T-cell (primary cell): ENCODE measurements at regions of chr4 and their contacts with region 1.

Region 1: DNA sequence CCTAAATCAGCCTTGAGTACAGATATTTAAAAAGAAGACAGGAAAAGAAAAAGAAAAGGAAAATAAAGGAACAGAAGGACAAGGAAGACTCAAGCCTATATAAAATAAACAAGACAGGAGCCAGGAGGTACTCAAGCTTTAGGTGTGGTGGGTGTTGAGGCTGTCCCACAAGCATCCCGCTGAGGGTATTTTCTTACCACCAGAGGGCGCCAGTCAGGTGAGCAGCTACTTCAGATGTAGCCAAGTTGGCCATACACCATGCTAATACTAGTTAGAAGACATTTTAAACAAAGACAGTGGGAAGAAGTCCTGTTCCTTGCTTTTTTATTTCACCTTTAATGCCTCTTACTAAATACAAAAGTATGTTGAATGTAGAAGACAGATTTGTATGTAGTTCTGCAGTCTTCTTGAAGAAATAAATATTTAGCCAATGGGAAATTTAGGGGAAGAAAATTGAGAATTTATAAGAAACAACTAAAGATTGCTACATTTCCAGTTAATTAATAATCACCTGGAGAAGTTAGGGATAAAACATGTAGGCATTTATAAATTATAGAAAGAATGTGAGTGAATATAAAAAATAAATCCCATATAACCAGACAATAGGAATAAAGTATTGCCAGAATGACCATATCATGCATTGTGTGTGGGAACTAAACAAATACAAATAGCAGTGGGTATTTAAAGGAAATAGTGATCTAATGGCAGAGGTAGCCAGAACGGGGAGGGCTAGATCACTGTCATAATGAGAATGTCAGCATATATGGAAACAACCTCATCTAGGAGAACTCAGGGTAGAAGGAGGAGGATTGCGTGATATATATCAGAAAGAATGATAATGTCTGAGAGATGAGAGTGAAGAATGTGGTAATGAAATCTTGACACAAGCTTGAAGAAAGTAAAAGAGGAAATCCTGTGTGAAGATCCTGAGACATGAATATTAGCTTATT is 71.0 kb downstream of the MTHFD2L start:
- DNase-seq: peak; percentile 19 to 83 (median 62)
- ATAC-seq: peak; percentile 52 to 78 (median 66)
- H3K4me3 ChIP-seq: no peak overlapping the region
- H3K4me3 Mint-ChIP-seq: no peak overlapping the region
- H3K27ac ChIP-seq: no peak overlapping the region
- H3K27ac Mint-ChIP-seq: no peak overlapping the region
- H3K4me1 ChIP-seq: no peaks in the 10 kb centered on the region
- H3K4me1 Mint-ChIP-seq: peaks cover 0 to 1% (median 0%) of the 10 kb centered on the region in 3 donors
- H3K27me3 ChIP-seq: no peaks in the 10 kb centered on the region
- H3K27me3 Mint-ChIP-seq: no peaks in the 10 kb centered on the region

Region 2: DNA sequence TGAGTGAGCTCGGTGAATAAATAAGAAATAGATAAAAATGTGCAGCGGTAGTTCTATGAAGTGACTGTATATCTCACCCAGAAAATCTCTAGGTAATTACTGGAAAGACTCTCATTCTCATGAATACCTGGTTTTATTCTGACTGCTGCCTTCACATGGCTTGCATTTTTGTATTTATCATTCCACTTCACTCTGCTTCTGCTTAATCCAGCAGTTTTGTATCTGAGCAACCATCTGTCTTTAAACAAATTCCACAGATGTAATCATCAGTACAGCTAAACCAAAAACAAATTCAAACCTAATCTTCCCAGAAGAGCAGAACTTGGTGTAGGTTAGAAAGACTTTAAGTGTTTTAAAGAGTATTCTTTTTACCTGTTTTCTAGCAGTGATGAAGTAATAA is 836.0 kb before region 1 on chr4:
- CTCF ChIA-PET with region 1: no interaction called
- POLR2A ChIA-PET with region 1: no interaction called
- DNase-seq: no peak
- ATAC-seq: no peak
- H3K4me3 ChIP-seq: no peak overlapping the region
- H3K4me3 Mint-ChIP-seq: no peak overlapping the region
- H3K27ac ChIP-seq: no peak overlapping the region
- H3K27ac Mint-ChIP-seq: no peak overlapping the region
- H3K4me1 ChIP-seq: no peaks in the 10 kb centered on the region
- H3K4me1 Mint-ChIP-seq: no peaks in the 10 kb centered on the region
- H3K27me3 ChIP-seq: no peaks in the 10 kb centered on the region
- H3K27me3 Mint-ChIP-seq: peaks cover 8% of the 10 kb centered on the region in 2 donors

Region 3: GRCh38 chr4:73964862-73965611 is 263.9 kb before region 1 on chr4:
- CTCF ChIA-PET with region 1: no interaction called
- POLR2A ChIA-PET with region 1: no interaction called
- DNase-seq: no peak
- ATAC-seq: no peak
- H3K4me3 ChIP-seq: no peak overlapping the region
- H3K4me3 Mint-ChIP-seq: no peak overlapping the region
- H3K27ac ChIP-seq: no peak overlapping the region
- H3K27ac Mint-ChIP-seq: no peak overlapping the region
- H3K4me1 ChIP-seq: no peaks in the 10 kb centered on the region
- H3K4me1 Mint-ChIP-seq: no peaks in the 10 kb centered on the region
- H3K27me3 ChIP-seq: peaks cover 0 to 3% of the 10 kb centered on the region in 2 experiments
- H3K27me3 Mint-ChIP-seq: no peaks in the 10 kb centered on the region

Region 4: DNA sequence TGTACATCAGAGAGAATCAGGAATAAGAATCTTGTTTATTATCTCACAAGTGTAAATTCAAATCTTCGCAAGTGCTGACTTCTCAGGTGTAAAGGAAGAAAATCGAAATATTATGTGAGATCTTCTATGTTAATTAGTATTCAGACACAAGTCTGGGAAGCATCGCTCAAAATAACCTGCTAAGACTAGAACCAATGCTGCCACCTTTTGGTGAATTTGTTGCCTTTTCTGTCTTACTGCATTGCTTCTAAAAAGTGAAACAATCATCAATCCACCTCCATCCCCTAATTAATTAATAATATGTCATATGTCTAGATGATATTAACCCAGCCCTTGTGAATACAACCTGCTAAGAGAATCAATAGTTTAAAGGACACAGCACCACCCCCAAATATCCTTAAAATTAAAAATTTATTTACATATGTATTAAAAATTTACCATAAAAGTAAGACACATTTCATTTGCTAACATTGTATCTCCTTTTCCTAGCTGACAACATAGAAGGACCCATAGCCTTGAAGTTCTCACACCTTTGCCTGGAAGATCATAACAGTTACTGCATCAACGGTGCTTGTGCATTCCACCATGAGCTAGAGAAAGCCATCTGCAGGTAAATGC is 82.8 kb after region 1 on chr4:
- CTCF ChIA-PET with region 1: interaction called, 4 to 13 read pairs
- POLR2A ChIA-PET with region 1: no interaction called
- DNase-seq: peak in 6 of 35 experiments; percentile 7 to 64 (median 12)
- ATAC-seq: no peak
- H3K4me3 ChIP-seq: no peak overlapping the region
- H3K4me3 Mint-ChIP-seq: no peak overlapping the region
- H3K27ac ChIP-seq: no peak overlapping the region
- H3K27ac Mint-ChIP-seq: no peak overlapping the region
- H3K4me1 ChIP-seq: peaks cover 0 to 10% of the 10 kb centered on the region in 2 experiments
- H3K4me1 Mint-ChIP-seq: peaks cover 9 to 13% (median 12%) of the 10 kb centered on the region in 3 donors
- H3K27me3 ChIP-seq: no peaks in the 10 kb centered on the region
- H3K27me3 Mint-ChIP-seq: peaks cover 0 to 3% of the 10 kb centered on the region in 2 donors

Region 5: DNA sequence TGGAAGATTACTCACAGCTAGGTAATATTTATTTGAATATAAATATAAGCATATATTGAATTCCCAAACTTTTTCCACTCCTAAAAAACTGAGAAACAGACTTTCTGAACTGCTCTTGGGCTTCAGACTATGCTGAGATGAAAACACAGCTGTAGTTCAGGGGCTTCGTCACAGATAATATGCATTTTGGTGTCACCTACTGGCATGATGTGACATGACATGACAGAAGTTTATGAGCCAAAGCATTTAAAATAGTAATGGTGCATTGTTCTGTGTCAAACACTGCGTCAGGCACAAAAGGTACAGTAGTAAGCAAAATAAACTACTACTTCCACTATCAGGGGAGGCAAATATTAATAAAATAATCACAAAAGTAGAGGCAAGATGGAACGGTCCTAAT is 394.1 kb after region 1 on chr4:
- CTCF ChIA-PET with region 1: interaction called in 1 of 2 experiments, 14 read pairs
- POLR2A ChIA-PET with region 1: no interaction called
- DNase-seq: peak in 8 of 35 experiments; percentile 0 to 51 (median 4)
- ATAC-seq: peak in 3 of 4 experiments; percentile 35 to 69 (median 53)
- H3K4me3 ChIP-seq: no peak overlapping the region
- H3K4me3 Mint-ChIP-seq: no peak overlapping the region
- H3K27ac ChIP-seq: no peak overlapping the region
- H3K27ac Mint-ChIP-seq: no peak overlapping the region
- H3K4me1 ChIP-seq: peaks cover 0 to 14% of the 10 kb centered on the region in 2 experiments
- H3K4me1 Mint-ChIP-seq: peaks cover 22 to 35% (median 23%) of the 10 kb centered on the region in 3 donors
- H3K27me3 ChIP-seq: no peaks in the 10 kb centered on the region
- H3K27me3 Mint-ChIP-seq: peaks cover 0 to 3% of the 10 kb centered on the region in 2 donors

Region 6: GRCh38 chr4:74675673-74676279 is 446.8 kb after region 1 on chr4:
- CTCF ChIA-PET with region 1: interaction called, 3 to 17 read pairs
- POLR2A ChIA-PET with region 1: interaction called in 1 of 2 experiments, 3 read pairs
- DNase-seq: peak in 2 of 35 experiments; percentile 3 to 52
- ATAC-seq: peak in 1 of 4 experiments; percentile 57
- H3K4me3 ChIP-seq: no peak overlapping the region
- H3K4me3 Mint-ChIP-seq: no peak overlapping the region
- H3K27ac ChIP-seq: no peak overlapping the region
- H3K27ac Mint-ChIP-seq: no peak overlapping the region
- H3K4me1 ChIP-seq: no peaks in the 10 kb centered on the region
- H3K4me1 Mint-ChIP-seq: peaks cover 2 to 6% (median 3%) of the 10 kb centered on the region in 3 donors
- H3K27me3 ChIP-seq: no peaks in the 10 kb centered on the region
- H3K27me3 Mint-ChIP-seq: peaks cover 6 to 10% of the 10 kb centered on the region in 2 donors